PC-3 (cell line): ENCODE measurements at regions of chr13 and their contacts with region 1.

Region 1: DNA sequence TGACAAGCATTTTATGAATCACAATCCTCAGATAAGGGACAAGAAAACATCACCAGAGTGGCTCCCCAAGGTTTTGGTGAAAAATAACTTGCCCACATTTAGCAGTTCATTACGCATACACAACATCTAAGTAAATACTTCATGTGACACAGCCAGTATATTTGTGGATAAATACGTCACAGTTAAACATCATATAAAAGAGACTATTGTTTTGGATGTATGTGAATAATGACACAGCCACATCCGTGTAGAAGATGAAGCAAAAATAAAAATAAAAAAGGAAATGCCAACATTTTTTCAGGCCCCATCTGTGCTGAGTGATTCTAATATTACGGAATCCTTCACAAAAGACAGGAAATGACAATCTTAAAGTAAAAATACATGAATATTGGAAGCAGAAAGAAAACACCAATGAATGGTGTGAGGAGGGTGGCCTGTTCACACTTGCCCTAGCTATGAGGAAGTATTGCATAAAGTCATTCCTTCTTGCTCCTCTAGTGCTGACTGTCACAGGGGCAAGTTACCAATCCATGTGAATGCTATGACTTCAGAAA is 457.1 kb downstream of the KLF12 start:
- DNase-seq: peak; percentile 71
- ATAC-seq: peak; percentile 45
- H3K4me3 ChIP-seq: no peak overlapping the region
- H3K27ac ChIP-seq: peak overlapping the region; percentile 100
- H3K4me1 ChIP-seq: peaks cover 51% of the 10 kb centered on the region
- H3K27me3 ChIP-seq: no peaks in the 10 kb centered on the region
- CTCF ChIP-seq: no peak

Region 2: DNA sequence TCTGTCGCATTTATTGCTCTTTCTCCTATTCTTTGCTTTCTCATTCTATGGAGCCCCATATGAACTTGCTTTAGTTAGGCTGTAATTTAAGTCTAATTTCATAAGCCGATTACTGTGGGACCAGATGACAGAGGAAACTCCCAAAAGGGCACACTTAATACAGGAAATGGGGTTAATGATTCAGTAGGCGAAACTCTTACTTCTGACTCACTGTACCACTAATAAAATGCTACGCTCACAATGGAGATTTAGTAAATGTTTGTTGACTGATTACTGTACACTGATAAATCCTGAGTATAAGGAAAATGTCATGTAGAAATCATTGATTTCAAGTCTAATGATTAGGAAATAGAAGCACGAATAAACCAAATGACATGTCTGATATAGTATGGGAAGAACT is 341.9 kb before region 1 on chr13:
- CTCF ChIA-PET with region 1: no interaction called
- POLR2A ChIA-PET with region 1: no interaction called
- intact Hi-C with region 1: loop called (anchors 2 kb)
- DNase-seq: peak; percentile 90
- ATAC-seq: peak; percentile 60
- H3K4me3 ChIP-seq: no peak overlapping the region
- H3K27ac ChIP-seq: peak overlapping the region; percentile 100
- H3K4me1 ChIP-seq: peaks cover 60% of the 10 kb centered on the region
- H3K27me3 ChIP-seq: no peaks in the 10 kb centered on the region
- CTCF ChIP-seq: no peak

Region 3: GRCh38 chr13:73451221-73452029 is 225.7 kb before region 1 on chr13:
- CTCF ChIA-PET with region 1: no interaction called
- POLR2A ChIA-PET with region 1: no interaction called
- intact Hi-C with region 1: loop called (anchors 1 kb)
- DNase-seq: peak; percentile 86
- ATAC-seq: peak; percentile 94
- H3K4me3 ChIP-seq: peak overlapping the region; percentile 7; the same call in 1 of the 2 replicates
- H3K27ac ChIP-seq: peak overlapping the region; percentile 98
- H3K4me1 ChIP-seq: peaks cover 40% of the 10 kb centered on the region
- H3K27me3 ChIP-seq: no peaks in the 10 kb centered on the region
- CTCF ChIP-seq: no peak

Region 4: GRCh38 chr13:73544175-73544574 is 132.9 kb before region 1 on chr13:
- CTCF ChIA-PET with region 1: no interaction called
- POLR2A ChIA-PET with region 1: no interaction called
- intact Hi-C with region 1: loop called (anchors 5 kb)
- DNase-seq: peak; percentile 27
- ATAC-seq: peak; percentile 57; the same call in 1 of the 2 replicates
- H3K4me3 ChIP-seq: no peak overlapping the region
- H3K27ac ChIP-seq: peak overlapping the region; percentile 1; the same call in 1 of the 2 replicates
- H3K4me1 ChIP-seq: peaks cover 10% of the 10 kb centered on the region; the same call in 1 of the 2 replicates
- H3K27me3 ChIP-seq: no peaks in the 10 kb centered on the region
- CTCF ChIP-seq: peak; percentile 50

Region 5: DNA sequence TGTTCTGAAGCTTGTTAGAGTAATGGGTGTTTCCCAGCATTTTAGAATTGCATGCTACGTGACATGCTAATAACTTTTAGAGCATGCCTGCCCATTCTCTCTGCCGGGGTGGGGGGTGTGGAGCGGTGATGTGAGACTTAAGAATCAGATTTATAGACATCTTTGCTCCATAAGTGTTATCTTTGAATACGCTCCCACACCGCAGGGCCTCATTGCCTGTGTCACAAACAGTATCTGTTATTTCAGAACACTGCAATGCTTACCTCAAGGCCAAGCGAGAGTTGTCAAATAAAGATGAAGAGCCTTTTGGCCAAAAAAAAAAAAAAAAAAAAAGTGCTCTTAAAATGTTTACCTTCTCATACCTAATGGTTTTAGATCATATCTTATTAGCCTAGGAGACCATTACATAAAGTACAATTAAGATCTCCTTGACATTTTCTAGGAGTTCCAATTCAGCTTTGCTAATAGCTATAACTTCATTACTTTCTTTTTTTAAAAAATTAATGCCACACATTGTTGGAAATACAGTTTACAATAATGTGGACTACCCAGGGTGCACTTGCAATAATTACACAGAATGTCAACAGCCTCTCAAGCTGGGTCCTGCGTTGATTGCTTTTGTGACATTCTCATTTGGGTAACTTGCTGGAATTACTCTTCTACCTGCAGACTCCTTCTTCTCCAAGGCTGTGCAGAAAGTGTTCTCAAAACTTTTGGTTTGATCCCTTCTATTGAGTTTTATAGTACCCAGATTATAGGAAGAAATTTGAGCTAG is 68.2 kb before region 1 on chr13:
- CTCF ChIA-PET with region 1: no interaction called
- POLR2A ChIA-PET with region 1: no interaction called
- intact Hi-C with region 1: loop called (anchors 5 kb)
- DNase-seq: no peak
- ATAC-seq: no peak
- H3K4me3 ChIP-seq: no peak overlapping the region
- H3K27ac ChIP-seq: peak overlapping the region; percentile 74
- H3K4me1 ChIP-seq: peaks cover 36% of the 10 kb centered on the region
- H3K27me3 ChIP-seq: no peaks in the 10 kb centered on the region
- CTCF ChIP-seq: no peak